Caco-2 (cell line): ENCODE measurements at regions of chr15 and their contacts with region 1.

Region 1: DNA sequence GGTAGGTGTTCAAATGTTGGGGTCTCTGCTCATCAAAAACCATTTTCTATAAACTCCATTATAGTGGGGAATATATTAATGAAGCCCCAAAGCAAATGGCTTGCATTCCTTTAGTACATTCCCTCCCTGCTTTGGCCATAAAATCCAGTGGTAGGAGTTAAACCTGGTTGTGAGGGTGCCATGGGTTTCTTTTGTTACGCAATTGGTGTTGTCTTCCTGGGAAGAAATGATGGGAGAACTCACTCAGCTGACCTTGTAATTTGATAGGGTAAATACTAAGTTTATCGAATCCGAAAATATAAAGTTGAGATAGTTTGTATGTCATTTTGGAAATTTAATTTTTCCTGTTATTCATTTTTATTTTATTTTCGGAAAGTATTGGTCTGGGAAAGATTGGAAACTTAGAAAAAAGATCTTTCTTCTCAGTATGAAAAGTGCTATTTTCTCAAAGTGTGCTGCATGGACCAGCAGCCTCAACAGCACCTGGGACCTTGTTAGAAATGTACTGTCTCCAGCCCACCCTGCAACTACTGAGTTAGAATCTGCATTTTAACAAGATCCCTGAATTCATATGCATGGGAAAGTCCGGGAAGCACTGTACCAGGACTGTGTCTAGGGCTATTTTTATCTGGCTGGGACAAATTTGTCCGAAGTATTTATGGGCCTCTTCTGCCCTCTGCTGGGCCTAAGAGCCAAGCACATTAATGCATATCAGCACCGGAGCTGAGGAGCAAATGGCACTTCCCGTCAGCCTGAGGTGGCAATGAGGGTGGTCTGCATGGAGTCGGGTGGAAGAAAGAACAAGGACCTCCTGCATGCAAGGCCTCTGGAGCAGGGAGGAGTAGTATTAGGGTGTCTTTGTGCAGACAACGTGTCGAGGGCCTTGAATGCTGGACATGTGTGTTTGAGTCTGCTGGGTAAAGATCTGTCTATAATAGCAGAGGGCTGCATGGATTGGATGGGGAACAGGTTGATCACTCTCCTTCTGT is 54.7 kb downstream of the FAM81A start:
- DNase-seq: peak; percentile 45 to 64
- H3K4me3 ChIP-seq: no peak overlapping the region
- H3K4me3 Mint-ChIP-seq: peak overlapping the region; percentile 17
- H3K27ac Mint-ChIP-seq: no peak overlapping the region
- H3K4me1 ChIP-seq: no peaks in the 10 kb centered on the region
- H3K4me1 Mint-ChIP-seq: peaks cover 7% of the 10 kb centered on the region
- H3K27me3 ChIP-seq: no peaks in the 10 kb centered on the region
- H3K27me3 Mint-ChIP-seq: no peaks in the 10 kb centered on the region
- CTCF ChIP-seq: peak; percentile 76 to 78

Region 2: GRCh38 chr15:58980351-58980939 is 512.2 kb before region 1 on chr15:
- CTCF ChIA-PET with region 1: interaction called, 3 read pairs
- POLR2A ChIA-PET with region 1: no interaction called
- intact Hi-C with region 1: loop called (anchors 2 kb)
- DNase-seq: no peak
- H3K4me3 ChIP-seq: no peak overlapping the region
- H3K4me3 Mint-ChIP-seq: no peak overlapping the region
- H3K27ac Mint-ChIP-seq: no peak overlapping the region
- H3K4me1 ChIP-seq: no peaks in the 10 kb centered on the region
- H3K4me1 Mint-ChIP-seq: no peaks in the 10 kb centered on the region
- H3K27me3 ChIP-seq: no peaks in the 10 kb centered on the region
- H3K27me3 Mint-ChIP-seq: peaks cover 4% of the 10 kb centered on the region
- CTCF ChIP-seq: peak in 1 of 2 experiments; percentile 24

Region 3: DNA sequence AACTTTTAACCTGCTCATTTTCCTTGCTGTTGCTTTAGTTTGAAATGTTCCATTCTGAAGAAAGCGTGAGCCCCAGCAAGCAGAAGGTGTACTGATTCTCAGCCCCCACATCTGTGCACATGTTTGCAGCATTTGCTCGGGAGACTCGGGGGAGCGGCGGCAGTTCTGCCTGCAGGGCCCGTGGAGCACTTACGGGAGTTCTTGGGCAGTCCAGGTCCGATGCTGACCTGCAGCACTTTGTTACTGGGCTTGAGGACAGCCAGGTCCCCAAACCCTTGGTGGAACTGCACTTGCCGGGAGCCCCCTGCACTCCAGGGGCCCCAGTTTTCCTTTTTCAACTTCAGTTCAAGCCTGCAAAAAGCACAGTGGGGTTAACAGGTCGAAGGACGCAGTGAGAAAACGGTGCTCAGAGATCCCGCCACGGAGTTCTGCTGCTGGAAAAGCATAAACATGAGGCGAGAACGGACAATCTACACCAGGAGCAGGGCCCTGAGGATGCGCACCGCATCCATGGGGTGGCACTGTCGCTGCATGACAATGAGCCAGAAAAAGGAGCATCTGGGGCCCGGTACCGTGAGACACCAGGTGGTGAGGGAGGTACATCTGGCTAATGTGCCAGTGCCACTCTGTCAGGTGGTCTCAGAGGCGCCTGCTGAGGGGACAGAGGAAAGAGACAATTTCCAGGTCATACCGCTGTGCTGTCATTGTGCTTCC is 331.6 kb before region 1 on chr15:
- CTCF ChIA-PET with region 1: no interaction called
- POLR2A ChIA-PET with region 1: no interaction called
- intact Hi-C with region 1: loop called (anchors 1 kb)
- DNase-seq: peak; percentile 47 to 55
- H3K4me3 ChIP-seq: no peak overlapping the region
- H3K4me3 Mint-ChIP-seq: no peak overlapping the region
- H3K27ac Mint-ChIP-seq: no peak overlapping the region
- H3K4me1 ChIP-seq: peaks cover 8% of the 10 kb centered on the region
- H3K4me1 Mint-ChIP-seq: peaks cover 2% of the 10 kb centered on the region
- H3K27me3 ChIP-seq: no peaks in the 10 kb centered on the region
- H3K27me3 Mint-ChIP-seq: no peaks in the 10 kb centered on the region
- CTCF ChIP-seq: peak in 1 of 2 experiments; percentile 44

Region 4: GRCh38 chr15:59247364-59247763 is 245.3 kb before region 1 on chr15:
- CTCF ChIA-PET with region 1: interaction called, 6 read pairs
- POLR2A ChIA-PET with region 1: no interaction called
- intact Hi-C with region 1: loop called (anchors 1 kb)
- DNase-seq: peak; percentile 64 to 68
- H3K4me3 ChIP-seq: no peak overlapping the region
- H3K4me3 Mint-ChIP-seq: no peak overlapping the region
- H3K27ac Mint-ChIP-seq: no peak overlapping the region
- H3K4me1 ChIP-seq: peaks cover 5% of the 10 kb centered on the region; the same call in 1 of the 2 replicates
- H3K4me1 Mint-ChIP-seq: no peaks in the 10 kb centered on the region
- H3K27me3 ChIP-seq: no peaks in the 10 kb centered on the region
- H3K27me3 Mint-ChIP-seq: no peaks in the 10 kb centered on the region
- CTCF ChIP-seq: peak; percentile 56 to 60

Region 5: GRCh38 chr15:59372352-59373211 is 120.1 kb before region 1 on chr15 and contains the start of gene MYO1E:
- CTCF ChIA-PET with region 1: interaction called, 4 read pairs
- POLR2A ChIA-PET with region 1: no interaction called
- intact Hi-C with region 1: loop called (anchors 2 kb)
- DNase-seq: peak; percentile 96 to 97
- H3K4me3 ChIP-seq: peak within 1 kb of the TSS; percentile 96
- H3K4me3 Mint-ChIP-seq: peak within 1 kb of the TSS; percentile 98
- H3K27ac Mint-ChIP-seq: peak within 1 kb of the TSS; percentile 97
- H3K4me1 ChIP-seq: peaks cover 31% of the 10 kb centered on the region
- H3K4me1 Mint-ChIP-seq: peaks cover 10% of the 10 kb centered on the region
- H3K27me3 ChIP-seq: no peaks in the 10 kb centered on the region
- H3K27me3 Mint-ChIP-seq: no peaks in the 10 kb centered on the region
- CTCF ChIP-seq: no peak
- total RNA-seq, gene MYO1E: 182 and 187 TPM in 2 replicates

Region 6: GRCh38 chr15:59562448-59563186 is 69.9 kb after region 1 on chr15:
- CTCF ChIA-PET with region 1: no interaction called
- POLR2A ChIA-PET with region 1: no interaction called
- intact Hi-C with region 1: no loop called
- DNase-seq: no peak
- H3K4me3 ChIP-seq: no peak overlapping the region
- H3K4me3 Mint-ChIP-seq: no peak overlapping the region
- H3K27ac Mint-ChIP-seq: no peak overlapping the region
- H3K4me1 ChIP-seq: no peaks in the 10 kb centered on the region
- H3K4me1 Mint-ChIP-seq: no peaks in the 10 kb centered on the region
- H3K27me3 ChIP-seq: no peaks in the 10 kb centered on the region
- H3K27me3 Mint-ChIP-seq: no peaks in the 10 kb centered on the region
- CTCF ChIP-seq: no peak